Ovary (tissue), 10 donors: ENCODE measurements at regions of chr15 and their contacts with region 1.

Region 1: GRCh38 chr15:40469776-40470399 is 896 bp upstream of the CHST14 start:
- DNase-seq: no peak
- H3K4me3 ChIP-seq: no peak overlapping the region
- H3K27ac ChIP-seq: peak overlapping the region; percentile 74 to 89
- H3K4me1 ChIP-seq: peaks cover 6% of the 10 kb centered on the region
- H3K27me3 ChIP-seq: no peaks in the 10 kb centered on the region
- CTCF ChIP-seq: no peak
- EP300 ChIP-seq: no peak
- POLR2A ChIP-seq: no peak

Region 2: GRCh38 chr15:40506964-40507571 is 37.2 kb after region 1 on chr15:
- intact Hi-C with region 1: loop called in 1 of 4 experiments (anchors 10 kb)
- DNase-seq: peak; percentile 90 to 93 (median 90)
- H3K4me3 ChIP-seq: peak overlapping the region; percentile 24
- H3K27ac ChIP-seq: peak overlapping the region in 1 of 2 donors; percentile 76
- H3K4me1 ChIP-seq: peaks cover 9% of the 10 kb centered on the region
- H3K27me3 ChIP-seq: no peaks in the 10 kb centered on the region
- CTCF ChIP-seq: peak; percentile 69 to 84 (median 78)
- EP300 ChIP-seq: no peak
- POLR2A ChIP-seq: peak; percentile 17